ENCODE measurements at regions of chr2 and their contacts with region 1.

Region 1: GRCh38 chr2:130756053-130756873 is 923 bp downstream of the AMER3 start:
- DNase-seq: peak in 1 of 2 experiments; percentile 82
- H3K4me3 ChIP-seq: peak overlapping the region; percentile 82
- H3K4me3 Mint-ChIP-seq: peak overlapping the region; percentile 79
- H3K27ac Mint-ChIP-seq: no peak overlapping the region
- H3K4me1 ChIP-seq: no peaks in the 10 kb centered on the region
- H3K4me1 Mint-ChIP-seq: no peaks in the 10 kb centered on the region
- H3K27me3 ChIP-seq: no peaks in the 10 kb centered on the region
- H3K27me3 Mint-ChIP-seq: peaks cover 23% of the 10 kb centered on the region
- CTCF ChIP-seq: peak in 1 of 2 experiments; percentile 12

Region 2: GRCh38 chr2:130727286-130728018 is 28.8 kb before region 1 on chr2:
- CTCF ChIA-PET with region 1: no interaction called
- POLR2A ChIA-PET with region 1: no interaction called
- intact Hi-C with region 1: loop called (anchors 1 kb)
- DNase-seq: peak; percentile 90 to 91
- H3K4me3 ChIP-seq: peak overlapping the region; percentile 40
- H3K4me3 Mint-ChIP-seq: peak overlapping the region; percentile 72
- H3K27ac Mint-ChIP-seq: peak overlapping the region; percentile 36
- H3K4me1 ChIP-seq: peaks cover 14% of the 10 kb centered on the region
- H3K4me1 Mint-ChIP-seq: no peaks in the 10 kb centered on the region
- H3K27me3 ChIP-seq: no peaks in the 10 kb centered on the region
- H3K27me3 Mint-ChIP-seq: no peaks in the 10 kb centered on the region
- CTCF ChIP-seq: no peak

Region 3: GRCh38 chr2:130744287-130745117 is 11.8 kb before region 1 on chr2:
- CTCF ChIA-PET with region 1: interaction called, 5 read pairs
- POLR2A ChIA-PET with region 1: interaction called, 11 read pairs
- intact Hi-C with region 1: loop called (anchors 1 kb)
- DNase-seq: peak; percentile 86 to 93
- H3K4me3 ChIP-seq: no peak overlapping the region
- H3K4me3 Mint-ChIP-seq: peak overlapping the region; percentile 51
- H3K27ac Mint-ChIP-seq: peak overlapping the region; percentile 84
- H3K4me1 ChIP-seq: peaks cover 26% of the 10 kb centered on the region
- H3K4me1 Mint-ChIP-seq: peaks cover 25% of the 10 kb centered on the region
- H3K27me3 ChIP-seq: no peaks in the 10 kb centered on the region
- H3K27me3 Mint-ChIP-seq: no peaks in the 10 kb centered on the region
- CTCF ChIP-seq: no peak

Measured in Caco-2 (cell line).